H1 (cell line): ENCODE measurements at regions of chr2 and their contacts with region 1.

Region 1: GRCh38 chr2:191869178-191869577 is 22.3 kb upstream of the CAVIN2 start:
- DNase-seq: peak; percentile 75 to 76
- H3K4me3 ChIP-seq: no peak overlapping the region
- H3K27ac ChIP-seq: no peak overlapping the region
- H3K4me1 ChIP-seq: peaks cover 0 to 4% (median 0%) of the 10 kb centered on the region in 4 experiments; a peak in 1 of 7 replicates
- H3K27me3 ChIP-seq: no peaks in the 10 kb centered on the region
- CTCF ChIP-seq: peak; percentile 74 to 93 (median 81)
- EP300 ChIP-seq: no peak
- POLR2A ChIP-seq: no peak
- RAD21 ChIP-seq: peak; percentile 93 to 94

Region 2: DNA sequence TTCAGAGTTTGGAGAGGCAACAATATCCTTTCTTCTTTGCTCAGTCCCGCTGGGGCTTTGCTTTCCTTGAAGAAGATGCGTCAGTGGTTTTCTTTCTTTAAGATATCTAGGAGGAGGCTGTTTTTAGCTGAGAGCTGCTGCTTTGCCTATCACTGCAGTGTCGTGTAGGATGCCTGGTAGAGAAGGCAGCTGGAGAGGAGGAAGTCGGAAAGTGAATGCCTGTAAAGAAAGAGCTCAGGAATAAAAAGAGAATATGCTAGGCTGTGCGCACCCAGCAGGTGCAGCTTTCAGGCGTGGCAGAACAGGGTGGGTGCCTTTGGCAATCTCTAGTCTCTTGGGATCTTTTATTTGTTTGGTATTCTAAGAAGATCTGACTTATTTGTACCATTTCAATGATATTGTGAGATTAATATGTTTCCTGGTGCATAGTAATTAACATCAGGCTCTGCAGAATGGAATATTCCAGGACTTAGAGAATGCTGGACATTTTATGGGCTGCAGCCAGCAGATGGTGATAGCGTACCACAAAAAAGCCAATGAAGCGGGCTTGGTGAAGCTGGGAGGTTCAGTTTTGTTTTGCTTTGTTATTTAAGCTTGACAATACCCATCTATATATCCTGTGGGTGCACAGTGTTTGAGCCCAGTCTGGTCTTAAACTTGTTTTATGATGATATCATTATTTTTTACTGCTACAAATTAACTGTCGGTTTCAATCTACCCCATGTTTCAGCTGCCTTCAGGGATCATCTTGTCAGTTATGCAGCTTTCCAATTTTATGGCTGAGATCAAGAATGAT is 57.2 kb before region 1 on chr2:
- CTCF ChIA-PET with region 1: interaction called, 55 read pairs
- POLR2A ChIA-PET with region 1: no interaction called
- DNase-seq: peak in 1 of 2 experiments; percentile 66
- H3K4me3 ChIP-seq: no peak overlapping the region
- H3K27ac ChIP-seq: no peak overlapping the region
- H3K4me1 ChIP-seq: no peaks in the 10 kb centered on the region
- H3K27me3 ChIP-seq: no peaks in the 10 kb centered on the region
- CTCF ChIP-seq: peak; percentile 40 to 84 (median 78)
- EP300 ChIP-seq: no peak
- POLR2A ChIP-seq: no peak
- RAD21 ChIP-seq: peak; percentile 94

Region 3: GRCh38 chr2:191831410-191831994 is 37.7 kb before region 1 on chr2:
- CTCF ChIA-PET with region 1: interaction called, 23 read pairs
- POLR2A ChIA-PET with region 1: no interaction called
- DNase-seq: no peak
- H3K4me3 ChIP-seq: 0 out of 8 replicates have a peak overlapping the region, but pooled peaks of 1 of the 4 experiments have one; percentile 25
- H3K27ac ChIP-seq: no peak overlapping the region
- H3K4me1 ChIP-seq: peaks cover 0 to 11% (median 10%) of the 10 kb centered on the region in 4 experiments; a peak in 3 of 7 replicates
- H3K27me3 ChIP-seq: no peaks in the 10 kb centered on the region
- CTCF ChIP-seq: no peak
- EP300 ChIP-seq: no peak
- POLR2A ChIP-seq: no peak
- RAD21 ChIP-seq: no peak

Region 4: GRCh38 chr2:191846515-191847476 is 22.4 kb before region 1 on chr2 and contains the start of gene CAVIN2:
- CTCF ChIA-PET with region 1: interaction called, 27 read pairs
- POLR2A ChIA-PET with region 1: no interaction called
- DNase-seq: no peak
- H3K4me3 ChIP-seq: no peak within 1 kb of the TSS
- H3K27ac ChIP-seq: no peak within 1 kb of the TSS
- H3K4me1 ChIP-seq: peaks cover 0 to 9% (median 6%) of the 10 kb centered on the region in 4 experiments; a peak in 5 of 7 replicates
- H3K27me3 ChIP-seq: no peaks in the 10 kb centered on the region
- CTCF ChIP-seq: no peak
- EP300 ChIP-seq: no peak
- POLR2A ChIP-seq: no peak
- RAD21 ChIP-seq: no peak
- total RNA-seq, gene CAVIN2: not detected in 2 replicates

Region 5: DNA sequence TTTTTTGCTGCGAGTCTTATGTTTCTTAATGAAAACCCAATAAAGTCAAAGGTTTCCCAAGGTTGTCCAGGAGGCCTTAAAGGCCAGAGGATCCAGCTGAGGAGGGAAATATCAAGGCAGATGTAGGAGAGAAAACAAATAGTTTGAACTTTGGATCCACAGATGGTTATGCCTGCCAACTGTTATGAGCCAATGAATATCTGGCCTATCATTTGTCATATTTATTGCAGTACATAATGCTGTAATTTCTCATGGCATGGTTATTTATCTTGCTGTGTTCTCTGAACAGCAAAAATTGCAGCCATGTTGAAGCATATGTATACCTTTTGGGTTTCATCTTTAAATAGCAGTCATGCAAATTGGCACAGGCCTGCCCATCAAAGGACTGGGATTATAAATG is 15.9 kb after region 1 on chr2:
- CTCF ChIA-PET with region 1: interaction called, 19 read pairs
- POLR2A ChIA-PET with region 1: no interaction called
- DNase-seq: no peak
- H3K4me3 ChIP-seq: no peak overlapping the region
- H3K27ac ChIP-seq: no peak overlapping the region
- H3K4me1 ChIP-seq: no peaks in the 10 kb centered on the region; a peak in 1 of 7 replicates
- H3K27me3 ChIP-seq: no peaks in the 10 kb centered on the region
- CTCF ChIP-seq: no peak
- EP300 ChIP-seq: no peak
- POLR2A ChIP-seq: no peak
- RAD21 ChIP-seq: no peak

Region 6: DNA sequence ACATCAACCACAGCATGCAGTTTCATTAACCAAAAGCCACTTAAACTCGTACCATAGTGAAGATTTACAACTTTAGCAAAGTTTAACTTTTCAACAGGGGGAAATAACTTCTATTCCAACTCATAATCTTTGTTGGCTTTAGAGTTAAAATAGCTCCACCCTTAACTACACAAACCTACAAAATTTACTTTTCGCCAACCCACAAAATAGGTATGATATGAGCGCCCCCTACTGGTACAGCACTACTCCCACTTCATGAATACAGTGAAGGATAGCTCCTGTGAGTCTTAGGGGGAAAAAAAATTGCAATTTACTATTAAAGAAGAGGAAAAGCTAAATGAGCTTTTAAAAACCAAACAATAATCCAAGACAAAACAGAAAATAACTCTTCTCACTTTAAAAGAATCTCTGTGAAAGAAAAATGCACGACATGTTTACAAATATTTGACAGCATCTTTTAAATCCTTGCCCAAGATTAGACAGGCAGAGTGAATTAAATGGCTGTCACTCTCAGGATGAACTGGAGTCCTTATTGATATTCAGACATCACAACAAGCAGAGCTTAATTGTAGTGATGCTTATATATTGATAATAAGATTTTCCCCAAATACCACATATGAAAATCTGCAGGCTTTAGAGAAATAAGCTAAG is 293.3 kb after region 1 on chr2:
- CTCF ChIA-PET with region 1: interaction called, 171 read pairs
- POLR2A ChIA-PET with region 1: interaction called, 5 read pairs
- DNase-seq: peak in 1 of 2 experiments; percentile 75
- H3K4me3 ChIP-seq: no peak overlapping the region
- H3K27ac ChIP-seq: no peak overlapping the region
- H3K4me1 ChIP-seq: no peaks in the 10 kb centered on the region
- H3K27me3 ChIP-seq: no peaks in the 10 kb centered on the region
- CTCF ChIP-seq: peak in 2 of 3 experiments; percentile 67 to 79; a peak in 3 of 4 replicates
- EP300 ChIP-seq: no peak
- POLR2A ChIP-seq: no peak
- RAD21 ChIP-seq: peak; percentile 92 to 94

Region 7: GRCh38 chr2:192286093-192286701 is 417.0 kb after region 1 on chr2:
- CTCF ChIA-PET with region 1: interaction called, 19 read pairs
- POLR2A ChIA-PET with region 1: no interaction called
- DNase-seq: no peak
- H3K4me3 ChIP-seq: no peak overlapping the region
- H3K27ac ChIP-seq: no peak overlapping the region
- H3K4me1 ChIP-seq: no peaks in the 10 kb centered on the region
- H3K27me3 ChIP-seq: no peaks in the 10 kb centered on the region
- CTCF ChIP-seq: peak in 2 of 3 experiments; percentile 52 to 56; a peak in 3 of 4 replicates
- EP300 ChIP-seq: no peak
- POLR2A ChIP-seq: no peak
- RAD21 ChIP-seq: peak; percentile 80 to 84